A549 (cell line): ENCODE measurements at regions of chr3 and their contacts with region 1.

Region 1: DNA sequence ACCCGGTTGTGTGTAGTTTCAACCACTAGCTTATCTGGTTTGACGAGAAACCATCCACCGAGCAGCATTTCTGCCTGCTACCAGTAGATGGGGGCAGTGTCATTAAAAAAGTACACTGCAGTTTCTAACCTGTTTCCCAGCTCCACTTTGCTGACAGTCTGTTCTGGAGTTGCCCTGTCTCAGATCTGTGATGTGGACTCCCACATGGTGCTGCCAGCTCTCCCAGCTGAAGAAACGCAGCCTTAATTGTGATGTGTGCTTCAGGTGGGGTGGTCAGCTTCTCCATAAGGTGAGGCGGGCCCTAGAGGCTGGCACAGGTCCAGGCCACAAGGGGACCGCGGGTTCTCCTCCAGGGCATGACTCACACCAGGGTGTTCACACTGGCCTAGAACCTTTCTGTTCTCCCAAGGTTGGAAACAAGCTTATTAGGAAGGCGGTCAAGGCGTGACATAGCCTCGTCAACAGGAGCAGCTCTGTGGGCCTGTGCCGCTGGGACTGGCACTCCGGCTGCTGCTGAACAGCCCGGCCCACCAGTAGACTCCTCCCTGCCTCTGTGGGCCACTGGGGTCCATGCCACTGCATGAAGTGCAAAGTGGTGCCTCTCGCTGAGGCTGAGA is 2.9 kb upstream of the FAM43A start:
- DNase-seq: peak; percentile 78 to 81
- ATAC-seq: peak; percentile 65 to 77
- H3K4me3 ChIP-seq: no peak overlapping the region
- H3K27ac ChIP-seq: peak overlapping the region; percentile 39 to 72; a peak in 5 of 6 replicates
- H3K4me1 ChIP-seq: peaks cover 25% of the 10 kb centered on the region
- CTCF ChIP-seq: peak; percentile 85
- EP300 ChIP-seq: no peak
- POLR2A ChIP-seq: no peak
- RAD21 ChIP-seq: peak; percentile 87 to 89

Region 2: DNA sequence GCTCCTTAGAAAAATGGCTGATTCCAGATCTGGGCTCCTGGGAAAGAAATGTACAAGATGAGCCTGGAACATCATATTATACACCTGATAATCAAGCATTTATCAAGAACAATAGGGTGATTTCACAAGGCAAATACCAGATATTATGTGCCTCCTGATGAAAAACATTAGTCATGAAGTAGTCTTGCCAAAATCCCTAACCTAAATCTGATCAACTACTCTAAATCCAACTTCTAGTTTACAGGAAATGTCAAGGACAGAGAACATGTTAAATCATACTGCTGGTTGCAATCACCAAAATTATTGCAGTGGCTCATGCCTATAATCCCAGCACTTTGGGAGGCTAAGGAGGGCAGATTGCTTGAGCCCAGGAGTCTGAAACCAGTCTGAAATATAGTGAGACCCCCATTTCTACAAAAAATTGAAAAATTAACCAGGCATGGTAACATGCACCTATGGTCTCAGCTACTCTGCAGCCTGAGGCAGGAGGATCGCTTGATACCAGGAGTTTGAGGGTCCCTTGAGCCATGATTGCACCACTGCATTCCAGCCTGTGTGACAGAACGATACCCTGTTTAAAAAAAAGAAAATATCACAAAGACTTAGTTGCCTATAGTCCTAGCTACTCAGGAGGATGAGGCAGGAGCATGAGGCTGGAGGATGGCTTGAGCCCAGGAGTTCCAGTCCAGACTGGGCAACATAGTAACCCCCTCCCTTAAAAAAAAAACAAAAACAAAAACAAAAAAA is 161.1 kb before region 1 on chr3:
- CTCF ChIA-PET with region 1: no interaction called
- POLR2A ChIA-PET with region 1: no interaction called
- DNase-seq: no peak
- ATAC-seq: peak in 1 of 2 experiments; percentile 37; a peak in 2 of 6 replicates
- H3K4me3 ChIP-seq: no peak overlapping the region
- H3K27ac ChIP-seq: peak overlapping the region; percentile 45 to 81
- H3K4me1 ChIP-seq: peaks cover 35% of the 10 kb centered on the region
- CTCF ChIP-seq: no peak
- EP300 ChIP-seq: no peak
- POLR2A ChIP-seq: no peak
- RAD21 ChIP-seq: no peak

Region 3: GRCh38 chr3:194671900-194672808 is 10.6 kb before region 1 on chr3 and contains the start of gene LSG1:
- CTCF ChIA-PET with region 1: interaction called, 63 read pairs
- POLR2A ChIA-PET with region 1: interaction called, 28 read pairs
- DNase-seq: peak; percentile 69 to 94
- ATAC-seq: peak; percentile 94 to 97
- H3K4me3 ChIP-seq: peak within 1 kb of the TSS; percentile 92
- H3K27ac ChIP-seq: peak within 1 kb of the TSS; percentile 86 to 90
- H3K4me1 ChIP-seq: peaks cover 13% of the 10 kb centered on the region; the same call in 2 of the 3 replicates
- CTCF ChIP-seq: no peak
- EP300 ChIP-seq: no peak
- POLR2A ChIP-seq: peak; percentile 62
- RAD21 ChIP-seq: no peak
- polyA plus RNA-seq, gene LSG1: 70.3 and 77.1 TPM in 2 replicates

Region 4: DNA sequence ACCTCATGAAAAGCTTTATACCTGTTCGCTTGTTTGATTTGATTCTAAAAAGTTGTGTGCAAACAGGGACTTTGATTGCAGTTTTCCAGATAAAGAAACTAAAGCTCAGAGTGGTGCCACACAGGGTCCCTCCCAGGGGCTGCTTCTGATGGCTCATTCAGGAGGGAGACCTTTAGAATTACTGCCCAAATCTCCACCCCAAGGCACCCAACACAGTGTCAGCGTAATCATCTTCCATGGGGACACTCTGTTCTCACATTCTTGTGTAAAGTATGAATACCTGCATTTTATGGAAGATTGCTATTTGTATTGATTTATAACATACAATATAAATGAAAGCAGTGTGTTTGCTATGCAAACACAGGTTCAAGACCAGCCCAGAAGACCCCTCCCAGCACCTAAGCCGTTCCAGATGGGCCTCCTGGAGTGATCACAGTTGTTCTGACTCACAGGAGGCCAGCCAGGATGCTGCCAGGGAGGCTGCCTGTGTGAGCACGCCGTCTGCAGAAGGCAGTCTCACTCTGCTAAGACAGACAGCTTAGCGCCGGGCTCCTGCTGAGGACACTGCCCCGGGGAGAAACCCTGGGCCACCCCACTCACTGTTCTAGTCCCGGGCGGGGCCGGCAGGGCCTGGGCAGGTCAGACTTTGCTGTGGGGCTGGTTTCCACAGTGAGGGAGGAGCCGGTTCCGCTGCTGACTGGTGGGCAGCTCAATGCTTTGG is 188.5 kb after region 1 on chr3:
- CTCF ChIA-PET with region 1: interaction called, 10 read pairs
- POLR2A ChIA-PET with region 1: interaction called, 6 read pairs
- DNase-seq: peak; percentile 61 to 73
- ATAC-seq: peak; percentile 92
- H3K4me3 ChIP-seq: no peak overlapping the region
- H3K27ac ChIP-seq: peak overlapping the region; percentile 79 to 85
- H3K4me1 ChIP-seq: peaks cover 37% of the 10 kb centered on the region
- CTCF ChIP-seq: no peak
- EP300 ChIP-seq: no peak
- POLR2A ChIP-seq: no peak
- RAD21 ChIP-seq: peak in 1 of 2 experiments; percentile 25; a peak in 2 of 5 replicates

Region 5: DNA sequence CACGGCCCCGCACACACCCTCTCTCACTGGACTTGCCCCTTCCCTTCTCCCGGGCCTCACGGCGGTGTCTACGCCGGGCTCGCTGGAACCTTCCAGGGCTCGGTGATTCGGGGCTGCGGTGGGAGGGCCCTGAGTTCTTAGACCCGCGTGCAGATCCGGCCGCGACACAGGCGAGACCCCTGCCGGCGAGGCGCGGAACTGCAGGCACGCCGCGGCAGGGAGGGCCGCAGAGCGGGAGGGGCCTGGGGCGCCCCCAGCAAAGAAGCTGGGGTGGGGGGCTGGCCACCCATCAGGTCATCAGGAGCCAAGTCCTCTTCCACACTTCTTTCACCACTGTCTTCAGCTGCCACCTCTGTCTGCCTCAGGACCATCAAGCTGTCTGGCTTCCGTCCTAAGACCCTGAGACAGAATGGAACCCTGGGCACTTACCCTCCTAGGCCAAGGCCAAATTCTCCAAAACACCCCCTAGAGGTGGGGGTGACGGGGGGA is 423.7 kb after region 1 on chr3:
- CTCF ChIA-PET with region 1: interaction called, 59 read pairs
- POLR2A ChIA-PET with region 1: interaction called, 4 read pairs
- DNase-seq: peak; percentile 34 to 39
- ATAC-seq: peak; percentile 74 to 91
- H3K4me3 ChIP-seq: no peak overlapping the region
- H3K27ac ChIP-seq: peak overlapping the region in 1 of 2 experiments; percentile 54; a peak in 2 of 6 replicates
- H3K4me1 ChIP-seq: peaks cover 46% of the 10 kb centered on the region
- CTCF ChIP-seq: peak; percentile 77
- EP300 ChIP-seq: no peak
- POLR2A ChIP-seq: no peak
- RAD21 ChIP-seq: peak; percentile 82 to 85

Region 6: GRCh38 chr3:195113044-195113443 is 430.2 kb after region 1 on chr3:
- CTCF ChIA-PET with region 1: interaction called, 59 read pairs
- POLR2A ChIA-PET with region 1: no interaction called
- DNase-seq: no peak
- ATAC-seq: no peak
- H3K4me3 ChIP-seq: no peak overlapping the region
- H3K27ac ChIP-seq: no peak overlapping the region
- H3K4me1 ChIP-seq: 0 out of 3 replicates have a peak, but pooled peaks cover 2% of the 10 kb centered on the region
- CTCF ChIP-seq: no peak
- EP300 ChIP-seq: no peak
- POLR2A ChIP-seq: no peak
- RAD21 ChIP-seq: no peak

Region 7: GRCh38 chr3:195259475-195260279 is 576.9 kb after region 1 on chr3:
- CTCF ChIA-PET with region 1: interaction called, 59 read pairs
- POLR2A ChIA-PET with region 1: interaction called, 3 read pairs
- DNase-seq: peak; percentile 54 to 72
- ATAC-seq: peak; percentile 75 to 77
- H3K4me3 ChIP-seq: peak overlapping the region; percentile 65
- H3K27ac ChIP-seq: peak overlapping the region; percentile 89 to 94
- H3K4me1 ChIP-seq: peaks cover 7% of the 10 kb centered on the region; the same call in 1 of the 3 replicates
- CTCF ChIP-seq: peak; percentile 91
- EP300 ChIP-seq: no peak
- POLR2A ChIP-seq: no peak
- RAD21 ChIP-seq: peak; percentile 25 to 90; a peak in 4 of 5 replicates

Region 8: DNA sequence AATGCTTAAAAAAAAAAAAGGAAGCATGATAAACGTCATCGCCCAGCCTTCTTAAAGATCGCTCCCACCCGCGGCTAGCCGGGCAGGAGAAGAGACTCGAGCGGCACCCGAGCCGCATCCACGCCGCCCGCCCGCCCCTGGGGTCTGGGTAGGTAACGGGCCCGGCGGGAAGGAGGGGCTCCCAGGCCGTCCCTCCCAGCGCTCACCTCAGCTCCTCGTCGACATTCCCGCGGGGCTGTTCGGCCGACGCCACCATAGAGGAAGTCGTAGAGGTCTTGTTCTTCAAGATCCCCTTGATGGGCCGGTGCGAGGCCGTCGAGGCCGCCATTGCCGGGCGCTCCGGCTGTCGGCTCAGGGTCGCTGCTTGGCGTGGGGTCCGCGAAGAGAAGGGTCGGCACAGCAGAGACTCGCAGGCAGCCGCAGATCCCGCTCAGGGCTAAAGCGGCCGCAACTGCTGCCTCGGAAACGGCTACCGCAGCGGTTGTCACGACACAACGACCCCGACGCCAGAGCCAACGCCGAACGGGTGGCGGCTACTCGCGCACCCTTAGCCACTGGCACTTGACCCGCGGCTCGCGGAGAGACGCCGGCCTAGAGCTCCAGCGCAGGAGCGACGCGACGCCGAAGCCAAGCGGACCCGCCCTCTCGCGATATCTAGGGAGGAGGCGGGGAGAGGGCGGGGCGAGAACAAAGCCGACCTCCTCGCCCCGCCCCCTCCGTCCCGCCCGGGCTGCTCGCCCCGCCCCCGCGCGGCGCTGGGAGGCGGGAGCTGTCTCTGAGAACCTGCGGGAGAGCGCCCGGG is 860.1 kb after region 1 on chr3 and contains the start of gene PPP1R2:
- CTCF ChIA-PET with region 1: interaction called, 4 read pairs
- POLR2A ChIA-PET with region 1: interaction called, 11 read pairs
- DNase-seq: peak; percentile 54 to 88
- ATAC-seq: peak; percentile 88 to 95
- H3K4me3 ChIP-seq: peak within 1 kb of the TSS; percentile 93
- H3K27ac ChIP-seq: peak within 1 kb of the TSS; percentile 86 to 91
- H3K4me1 ChIP-seq: peaks cover 29% of the 10 kb centered on the region; the same call in 2 of the 3 replicates
- CTCF ChIP-seq: no peak
- EP300 ChIP-seq: no peak
- POLR2A ChIP-seq: peak; percentile 93
- RAD21 ChIP-seq: no peak
- polyA plus RNA-seq, gene PPP1R2: 44.0 and 47.3 TPM in 2 replicates